ENCODE measurements at regions of chr2 and their contacts with region 1.

Region 1: GRCh38 chr2:219206442-219207253 is at the start of gene ZFAND2B:
- DNase-seq: peak; percentile 95 to 98 (median 96)
- ATAC-seq: peak; percentile 96 to 98 (median 98)
- H3K4me3 ChIP-seq: peak within 1 kb of the TSS; percentile 36 to 95 (median 71)
- H3K27ac ChIP-seq: peak within 1 kb of the TSS; percentile 80 to 99 (median 96)
- H3K4me1 ChIP-seq: peaks cover 0 to 25% (median 17%) of the 10 kb centered on the region in 12 donors
- H3K27me3 ChIP-seq: no peaks in the 10 kb centered on the region
- CTCF ChIP-seq: peak in 2 of 12 donors; percentile 12 to 24
- POLR2A ChIP-seq: peak; percentile 55 to 97
- total RNA-seq, gene ZFAND2B: 13.9 to 32.3 (median 23.5) TPM

Region 2: GRCh38 chr2:219020604-219021365 is 185.9 kb before region 1 on chr2:
- intact Hi-C with region 1: no loop called
- DNase-seq: no peak
- ATAC-seq: no peak
- H3K4me3 ChIP-seq: no peak overlapping the region
- H3K27ac ChIP-seq: no peak overlapping the region
- H3K4me1 ChIP-seq: no peaks in the 10 kb centered on the region
- H3K27me3 ChIP-seq: peaks cover 0 to 24% (median 0%) of the 10 kb centered on the region in 9 donors
- CTCF ChIP-seq: no peak
- POLR2A ChIP-seq: no peak

Region 3: DNA sequence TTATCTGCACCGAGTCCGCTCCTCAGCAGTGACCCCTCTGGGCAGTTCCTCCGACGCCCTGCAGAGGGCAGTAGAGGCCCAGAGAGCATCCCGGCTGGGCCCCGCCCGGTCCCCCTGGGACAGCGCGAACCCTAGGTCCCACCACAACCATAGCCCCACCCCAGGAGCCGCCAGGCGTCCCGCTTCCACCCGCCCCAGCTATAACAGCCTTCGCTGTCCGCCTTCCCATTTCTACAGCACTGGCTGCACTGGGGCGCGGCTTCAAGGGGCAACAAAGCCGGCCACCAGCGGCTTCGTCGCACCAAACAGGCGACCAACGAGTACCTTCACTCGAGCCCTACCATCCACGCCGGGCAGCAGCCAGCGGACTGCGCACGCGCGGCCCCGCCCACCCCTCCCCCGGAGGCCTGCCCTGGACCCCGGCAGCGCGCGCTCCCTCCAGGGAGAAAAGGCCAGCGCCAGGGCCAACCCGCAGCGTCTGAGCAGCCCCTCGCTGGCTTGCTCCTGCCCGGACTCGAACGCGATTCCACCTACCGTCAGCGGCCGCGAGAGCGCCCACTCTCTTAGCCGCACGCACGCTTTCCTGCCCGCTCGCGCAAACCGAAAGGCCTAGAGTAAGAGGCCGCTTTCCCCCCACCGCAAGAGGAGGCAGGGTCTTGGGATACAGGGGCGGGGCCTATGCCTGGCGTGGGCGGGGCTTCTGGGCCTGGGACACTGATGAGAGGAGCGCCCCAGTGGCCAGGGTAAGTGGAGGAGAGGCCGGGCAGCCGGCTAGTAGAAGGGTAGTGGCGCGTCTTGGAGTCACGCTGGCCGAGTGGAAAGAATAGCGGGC is 46.2 kb before region 1 on chr2 and contains the start of gene NHEJ1:
- intact Hi-C with region 1: loop called in 5 of 10 experiments (anchors 2 to 5 kb)
- DNase-seq: peak; percentile 95 to 98 (median 96)
- ATAC-seq: peak; percentile 96 to 98 (median 98)
- H3K4me3 ChIP-seq: peak within 1 kb of the TSS; percentile 42 to 88 (median 68)
- H3K27ac ChIP-seq: peak within 1 kb of the TSS; percentile 88 to 99 (median 95)
- H3K4me1 ChIP-seq: peaks cover 0 to 15% (median 10%) of the 10 kb centered on the region in 12 donors
- H3K27me3 ChIP-seq: no peaks in the 10 kb centered on the region
- CTCF ChIP-seq: peak; percentile 98 to 100 (median 99)
- POLR2A ChIP-seq: peak in 1 of 2 donors; percentile 64
- total RNA-seq, gene NHEJ1: 4.6 to 13.2 (median 8.0) TPM

Region 4: DNA sequence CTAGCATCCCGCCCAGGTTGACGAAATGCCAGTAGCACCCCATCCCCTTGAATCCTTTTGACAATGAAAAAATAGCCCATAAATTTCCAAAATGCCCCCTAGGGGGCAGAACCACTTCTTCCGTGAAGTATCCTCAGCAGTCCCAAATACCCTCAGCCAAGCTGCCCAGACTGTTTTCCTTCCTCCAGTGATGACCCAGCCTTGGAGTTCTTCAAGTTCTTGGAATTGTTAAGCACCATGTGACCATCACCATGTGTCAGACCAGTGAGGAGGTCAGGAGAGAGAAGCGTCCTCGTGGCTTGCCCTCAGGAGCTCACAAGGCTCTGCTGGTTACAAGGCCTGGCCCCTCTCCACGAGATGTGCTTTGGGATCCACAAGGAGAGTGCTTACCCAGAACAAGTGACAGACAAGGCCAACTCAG is 35.4 kb before region 1 on chr2:
- intact Hi-C with region 1: loop called in 5 of 10 experiments (anchors 2 to 5 kb)
- DNase-seq: peak in 3 of 5 donors; percentile 27 to 40 (median 29)
- ATAC-seq: peak; percentile 53 to 71 (median 62)
- H3K4me3 ChIP-seq: no peak overlapping the region
- H3K27ac ChIP-seq: peak overlapping the region in 8 of 12 donors; percentile 29 to 80 (median 51)
- H3K4me1 ChIP-seq: peaks cover 0 to 35% (median 22%) of the 10 kb centered on the region in 12 donors
- H3K27me3 ChIP-seq: no peaks in the 10 kb centered on the region
- CTCF ChIP-seq: peak; percentile 54 to 77 (median 68)
- POLR2A ChIP-seq: no peak

Region 5: GRCh38 chr2:219229305-219230058 is 22.8 kb after region 1 on chr2 and contains the starts of genes ANKZF1 and ATG9A:
- intact Hi-C with region 1: loop called in 1 of 10 experiments (anchors 1 kb)
- DNase-seq: peak; percentile 98 to 100 (median 99)
- ATAC-seq: peak; percentile 99
- H3K4me3 ChIP-seq: peak within 1 kb of the TSS; percentile 80 to 92 (median 88)
- H3K27ac ChIP-seq: peak within 1 kb of the TSS; percentile 93 to 99 (median 97)
- H3K4me1 ChIP-seq: peaks cover 3 to 51% (median 26%) of the 10 kb centered on the region in 12 donors
- H3K27me3 ChIP-seq: no peaks in the 10 kb centered on the region
- CTCF ChIP-seq: no peak
- POLR2A ChIP-seq: peak in 1 of 2 donors; percentile 85
- total RNA-seq, gene ANKZF1: 14.0 to 36.8 (median 28.0) TPM
- total RNA-seq, gene ATG9A: 62.8 to 147 (median 83.5) TPM

Region 6: GRCh38 chr2:219245148-219245898 is 38.7 kb after region 1 on chr2 and contains the starts of genes GLB1L and STK16:
- intact Hi-C with region 1: loop called in 2 of 10 experiments (anchors 2 kb)
- DNase-seq: peak; percentile 94 to 97 (median 95)
- ATAC-seq: peak; percentile 85 to 95 (median 95)
- H3K4me3 ChIP-seq: peak within 1 kb of the TSS; percentile 67 to 95 (median 84)
- H3K27ac ChIP-seq: peak within 1 kb of the TSS; percentile 77 to 98 (median 93)
- H3K4me1 ChIP-seq: peaks cover 6 to 54% (median 33%) of the 10 kb centered on the region in 12 donors
- H3K27me3 ChIP-seq: no peaks in the 10 kb centered on the region
- CTCF ChIP-seq: no peak
- POLR2A ChIP-seq: peak in 1 of 2 donors; percentile 80
- total RNA-seq, gene GLB1L: 1.6 to 7.9 (median 2.5) TPM
- total RNA-seq, gene STK16: 13.8 to 26.9 (median 19.1) TPM